ENCODE measurements at regions of chr12 and their contacts with region 1.

Region 1: GRCh38 chr12:62259993-62260732 is at the start of gene USP15:
- DNase-seq: peak; percentile 86 to 98
- H3K4me3 ChIP-seq: peak within 1 kb of the TSS; percentile 92 to 98
- H3K27ac ChIP-seq: peak within 1 kb of the TSS; percentile 89 to 92
- H3K4me1 ChIP-seq: peaks cover 9 to 18% of the 10 kb centered on the region in 2 donors
- H3K27me3 ChIP-seq: no peaks in the 10 kb centered on the region
- CTCF ChIP-seq: peak; percentile 65 to 77 (median 73)
- total RNA-seq, gene USP15: 48.2 TPM

Region 2: DNA sequence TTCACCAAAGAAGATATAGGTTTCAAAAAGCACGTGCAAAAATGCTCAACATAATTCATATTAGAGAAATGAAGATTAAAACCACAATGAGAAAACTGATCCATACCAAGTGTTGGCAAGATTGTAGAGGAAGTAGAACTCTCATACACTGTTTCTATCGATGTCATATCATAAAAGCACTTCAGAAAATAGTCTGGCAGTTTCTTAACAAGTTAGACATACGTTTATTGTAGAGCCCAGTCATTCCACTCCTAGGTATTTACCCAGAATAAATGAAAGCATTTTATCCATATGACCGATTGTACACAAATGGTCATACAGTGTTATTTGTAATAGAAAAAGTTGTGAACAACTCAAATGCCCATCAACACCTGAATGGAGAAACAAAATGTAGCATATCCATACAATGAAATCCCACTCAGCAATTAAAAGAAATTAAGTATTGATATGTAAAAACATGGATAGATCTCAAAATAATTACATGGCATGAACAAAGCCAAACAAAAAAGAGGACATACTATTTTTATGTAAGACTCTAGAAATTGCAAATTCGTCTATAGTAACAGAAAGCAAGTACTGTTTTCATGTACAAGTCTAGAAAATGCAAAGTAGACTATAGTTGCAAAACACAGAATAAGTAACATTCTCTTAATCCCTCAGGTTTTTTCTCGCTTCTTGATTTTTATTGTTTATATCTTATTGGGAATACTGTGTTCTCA is 41.1 kb after region 1 on chr12:
- intact Hi-C with region 1: no loop called
- DNase-seq: no peak
- H3K4me3 ChIP-seq: no peak overlapping the region
- H3K27ac ChIP-seq: no peak overlapping the region
- H3K4me1 ChIP-seq: no peaks in the 10 kb centered on the region
- H3K27me3 ChIP-seq: no peaks in the 10 kb centered on the region
- CTCF ChIP-seq: no peak

Region 3: GRCh38 chr12:62332598-62332997 is 72.4 kb after region 1 on chr12:
- intact Hi-C with region 1: loop called (anchors 5 kb)
- DNase-seq: no peak
- H3K4me3 ChIP-seq: no peak overlapping the region
- H3K27ac ChIP-seq: peak overlapping the region; percentile 29 to 76
- H3K4me1 ChIP-seq: peaks cover 0 to 2% of the 10 kb centered on the region in 2 donors
- H3K27me3 ChIP-seq: no peaks in the 10 kb centered on the region
- CTCF ChIP-seq: no peak

Region 4: GRCh38 chr12:62372137-62372536 is 112.0 kb after region 1 on chr12:
- intact Hi-C with region 1: loop called (anchors 5 kb)
- DNase-seq: no peak
- H3K4me3 ChIP-seq: no peak overlapping the region
- H3K27ac ChIP-seq: peak overlapping the region in 1 of 2 donors; percentile 74
- H3K4me1 ChIP-seq: peaks cover 0 to 8% of the 10 kb centered on the region in 2 donors
- H3K27me3 ChIP-seq: no peaks in the 10 kb centered on the region
- CTCF ChIP-seq: no peak

Region 5: DNA sequence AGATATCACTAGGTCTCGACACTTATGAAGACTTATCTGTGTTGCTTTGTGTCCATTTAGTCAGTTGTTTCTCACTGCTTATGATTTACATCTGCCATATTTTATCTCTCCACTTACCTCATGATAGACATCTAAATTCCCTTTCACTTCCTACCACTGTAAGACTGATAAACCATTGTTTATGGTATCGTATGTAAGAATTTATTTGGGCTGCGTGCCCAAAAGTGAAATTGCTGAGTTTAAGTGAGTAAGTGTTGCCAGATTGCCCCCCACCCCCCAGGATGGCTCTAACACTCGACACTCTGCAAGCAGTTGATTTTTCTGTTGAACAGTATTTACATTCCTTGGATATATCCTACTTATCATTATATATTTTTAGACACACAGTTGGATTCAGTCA is 136.6 kb after region 1 on chr12:
- intact Hi-C with region 1: loop called (anchors 5 kb)
- DNase-seq: no peak
- H3K4me3 ChIP-seq: no peak overlapping the region
- H3K27ac ChIP-seq: no peak overlapping the region
- H3K4me1 ChIP-seq: no peaks in the 10 kb centered on the region
- H3K27me3 ChIP-seq: no peaks in the 10 kb centered on the region
- CTCF ChIP-seq: no peak

Region 6: DNA sequence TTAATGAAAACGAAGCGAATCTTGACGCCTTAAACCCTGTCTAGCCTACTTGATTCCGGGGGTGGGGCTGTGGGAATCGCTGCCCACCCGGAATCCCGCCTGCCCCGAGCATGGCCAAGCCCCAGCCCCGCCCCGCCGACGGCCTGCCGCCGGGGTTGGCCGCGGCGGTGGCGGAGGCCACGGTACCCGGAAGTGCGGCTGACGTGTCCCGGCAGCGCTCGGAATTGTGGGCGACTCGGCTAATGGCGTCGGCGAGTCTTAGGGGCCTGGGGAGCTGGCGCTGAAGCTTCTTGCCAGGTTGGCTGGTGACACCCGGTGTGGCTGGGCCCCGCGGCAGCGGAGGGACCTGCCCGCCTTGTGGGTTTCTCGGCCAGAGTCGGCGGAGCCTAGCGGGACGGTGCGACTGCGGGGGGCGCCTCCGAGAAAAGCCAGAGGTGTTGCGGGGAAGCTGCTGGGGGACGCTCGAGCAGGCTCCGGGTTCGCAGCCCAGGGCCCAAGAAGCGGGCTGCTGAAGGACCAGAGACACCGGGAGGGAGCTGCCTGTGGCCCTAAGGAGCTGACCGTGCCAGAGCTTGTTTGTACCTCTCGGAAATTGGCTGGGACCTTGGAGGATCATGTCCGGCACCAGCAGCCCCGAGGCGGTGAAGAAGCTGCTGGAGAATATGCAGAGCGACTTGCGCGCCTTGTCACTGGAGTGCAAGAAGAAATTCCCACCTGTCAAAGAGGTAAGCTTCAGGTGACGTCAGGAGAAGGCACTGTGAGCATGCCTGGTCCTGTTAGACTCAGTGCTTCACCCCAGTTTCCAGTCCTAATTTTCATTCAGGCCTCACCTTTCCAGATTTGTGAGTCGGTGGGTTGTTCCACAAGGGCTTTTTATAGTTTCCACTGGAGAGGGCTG is 206.7 kb after region 1 on chr12 and contains the start of gene MON2:
- intact Hi-C with region 1: loop called (anchors 2 kb)
- DNase-seq: peak; percentile 44 to 94
- H3K4me3 ChIP-seq: peak within 1 kb of the TSS; percentile 92 to 95
- H3K27ac ChIP-seq: peak within 1 kb of the TSS; percentile 92 to 95
- H3K4me1 ChIP-seq: peaks cover 0 to 18% of the 10 kb centered on the region in 2 donors
- H3K27me3 ChIP-seq: no peaks in the 10 kb centered on the region
- CTCF ChIP-seq: no peak
- total RNA-seq, gene MON2: 14.4 TPM

Region 7: GRCh38 chr12:62703011-62703380 is 442.8 kb after region 1 on chr12:
- intact Hi-C with region 1: no loop called
- DNase-seq: no peak
- H3K4me3 ChIP-seq: no peak overlapping the region
- H3K27ac ChIP-seq: peak overlapping the region; percentile 62 to 84
- H3K4me1 ChIP-seq: peaks cover 12 to 22% of the 10 kb centered on the region in 2 donors
- H3K27me3 ChIP-seq: no peaks in the 10 kb centered on the region
- CTCF ChIP-seq: no peak